Endothelial cell of umbilical vein (primary cell): ENCODE measurements at regions of chr22 and their contacts with region 1.

Region 1: DNA sequence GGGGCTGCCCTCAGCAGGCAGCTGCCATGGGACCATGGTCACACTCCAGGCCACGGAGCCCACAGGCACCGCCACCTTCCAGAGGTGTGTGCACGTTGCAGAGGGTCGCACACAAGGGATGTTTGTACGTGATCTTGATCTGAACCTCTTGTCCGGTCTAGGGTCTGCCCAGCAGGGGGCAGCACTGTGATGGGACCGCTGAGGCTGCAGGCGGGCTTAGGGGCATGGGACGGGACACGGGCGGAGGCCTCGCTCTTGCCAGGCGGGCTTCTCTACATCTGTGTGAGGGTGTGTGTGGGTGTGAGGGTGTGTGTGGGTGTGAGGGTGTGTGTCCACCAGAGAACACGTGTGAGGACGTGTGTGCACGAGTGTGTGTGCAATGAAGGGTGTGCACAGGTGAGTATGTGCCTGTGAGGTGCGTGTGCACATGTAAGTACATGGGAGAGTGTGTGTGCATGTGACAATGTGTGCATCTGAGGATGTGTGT is 52.4 kb downstream of the CACNA1I start:
- DNase-seq: peak; percentile 28
- H3K4me3 ChIP-seq: no peak overlapping the region
- H3K27ac ChIP-seq: no peak overlapping the region
- H3K4me1 ChIP-seq: no peaks in the 10 kb centered on the region
- H3K27me3 ChIP-seq: peaks cover 0 to 7% of the 10 kb centered on the region in 2 experiments
- CTCF ChIP-seq: peak; percentile 51 to 66
- POLR2A ChIP-seq: no peak

Region 2: GRCh38 chr22:39785232-39785631 is 162.3 kb after region 1 on chr22:
- CTCF ChIA-PET with region 1: no interaction called
- POLR2A ChIA-PET with region 1: no interaction called
- dilution Hi-C with region 1: no loop called
- intact Hi-C with region 1: no loop called
- DNase-seq: no peak
- H3K4me3 ChIP-seq: no peak overlapping the region
- H3K27ac ChIP-seq: no peak overlapping the region
- H3K4me1 ChIP-seq: no peaks in the 10 kb centered on the region
- H3K27me3 ChIP-seq: peaks cover 3 to 11% of the 10 kb centered on the region in 2 experiments
- CTCF ChIP-seq: no peak
- POLR2A ChIP-seq: no peak

Region 3: GRCh38 chr22:40036591-40037225 is 413.8 kb after region 1 on chr22:
- CTCF ChIA-PET with region 1: interaction called, 6 read pairs
- POLR2A ChIA-PET with region 1: no interaction called
- dilution Hi-C with region 1: no loop called
- intact Hi-C with region 1: loop called (anchors 1 kb)
- DNase-seq: peak; percentile 69
- H3K4me3 ChIP-seq: no peak overlapping the region
- H3K27ac ChIP-seq: no peak overlapping the region
- H3K4me1 ChIP-seq: peaks cover 11% of the 10 kb centered on the region
- H3K27me3 ChIP-seq: peaks cover 3 to 24% of the 10 kb centered on the region in 2 experiments
- CTCF ChIP-seq: peak; percentile 62 to 84
- POLR2A ChIP-seq: no peak

Region 4: GRCh38 chr22:40094485-40094884 is 471.6 kb after region 1 on chr22:
- CTCF ChIA-PET with region 1: no interaction called
- POLR2A ChIA-PET with region 1: no interaction called
- dilution Hi-C with region 1: no loop called
- intact Hi-C with region 1: no loop called
- DNase-seq: no peak
- H3K4me3 ChIP-seq: no peak overlapping the region
- H3K27ac ChIP-seq: no peak overlapping the region
- H3K4me1 ChIP-seq: no peaks in the 10 kb centered on the region
- H3K27me3 ChIP-seq: peaks cover 0 to 7% of the 10 kb centered on the region in 2 experiments
- CTCF ChIP-seq: no peak
- POLR2A ChIP-seq: no peak